ENCODE measurements at regions of chr18 and their contacts with region 1.

Region 1: GRCh38 chr18:32271672-32272208 is 81.9 kb downstream of the MEP1B start:
- DNase-seq: no peak
- ATAC-seq: peak; percentile 71
- H3K4me3 ChIP-seq: no peak overlapping the region
- H3K4me1 ChIP-seq: peaks cover 13% of the 10 kb centered on the region
- CTCF ChIP-seq: no peak

Region 2: GRCh38 chr18:32158108-32158624 is 113.6 kb before region 1 on chr18:
- intact Hi-C with region 1: loop called (anchors 5 to 10 kb)
- DNase-seq: peak; percentile 78 to 89 (median 84)
- ATAC-seq: peak; percentile 90
- H3K4me3 ChIP-seq: no peak overlapping the region
- H3K4me1 ChIP-seq: peaks cover 16% of the 10 kb centered on the region
- CTCF ChIP-seq: peak; percentile 66

Region 3: GRCh38 chr18:32552421-32553030 is 280.8 kb after region 1 on chr18:
- intact Hi-C with region 1: loop called in 1 of 2 experiments (anchors 10 kb)
- DNase-seq: peak in 2 of 3 donors; percentile 33 to 90
- ATAC-seq: peak; percentile 93
- H3K4me3 ChIP-seq: no peak overlapping the region
- H3K4me1 ChIP-seq: no peaks in the 10 kb centered on the region
- CTCF ChIP-seq: peak; percentile 71

Measured in mucosa of descending colon (tissue), 3 donors.